IMR-90 (cell line): ENCODE measurements at regions of chr19 and their contacts with region 1.

Region 1: GRCh38 chr19:11435058-11435832 is at the starts of genes ODAD3 and PRKCSH:
- DNase-seq: peak; percentile 100
- ATAC-seq: peak; percentile 97
- H3K4me3 ChIP-seq: peak within 1 kb of the TSS; percentile 72
- H3K27ac ChIP-seq: peak within 1 kb of the TSS; percentile 69
- H3K4me1 ChIP-seq: peaks cover 9% of the 10 kb centered on the region
- H3K27me3 ChIP-seq: no peaks in the 10 kb centered on the region
- CTCF ChIP-seq: peak; percentile 90
- POLR2A ChIP-seq: no peak
- RAD21 ChIP-seq: peak; percentile 28
- total RNA-seq, gene ODAD3: under 0.01 and 0.28 TPM in 2 replicates
- total RNA-seq, gene PRKCSH: 36.0 and 55.8 TPM in 2 replicates

Region 2: GRCh38 chr19:11346092-11346940 is 88.9 kb before region 1 on chr19 and contains the starts of genes CCDC159 and TMEM205:
- CTCF ChIA-PET with region 1: no interaction called
- POLR2A ChIA-PET with region 1: no interaction called
- dilution Hi-C with region 1: no loop called
- in situ Hi-C with region 1: no loop called
- intact Hi-C with region 1: loop called (anchors 1 kb)
- DNase-seq: peak; percentile 99
- ATAC-seq: peak; percentile 96
- H3K4me3 ChIP-seq: peak within 1 kb of the TSS; percentile 73
- H3K27ac ChIP-seq: peak within 1 kb of the TSS; percentile 80
- H3K4me1 ChIP-seq: peaks cover 8% of the 10 kb centered on the region
- H3K27me3 ChIP-seq: no peaks in the 10 kb centered on the region
- CTCF ChIP-seq: 0 out of 2 replicates have a peak, but pooled peaks have one; percentile 22
- POLR2A ChIP-seq: peak; percentile 67
- RAD21 ChIP-seq: peak; percentile 17; the same call in 1 of the 2 replicates
- total RNA-seq, gene CCDC159: 4.4 and 4.7 TPM in 2 replicates
- total RNA-seq, gene TMEM205: 87.5 and 136 TPM in 2 replicates

Region 3: DNA sequence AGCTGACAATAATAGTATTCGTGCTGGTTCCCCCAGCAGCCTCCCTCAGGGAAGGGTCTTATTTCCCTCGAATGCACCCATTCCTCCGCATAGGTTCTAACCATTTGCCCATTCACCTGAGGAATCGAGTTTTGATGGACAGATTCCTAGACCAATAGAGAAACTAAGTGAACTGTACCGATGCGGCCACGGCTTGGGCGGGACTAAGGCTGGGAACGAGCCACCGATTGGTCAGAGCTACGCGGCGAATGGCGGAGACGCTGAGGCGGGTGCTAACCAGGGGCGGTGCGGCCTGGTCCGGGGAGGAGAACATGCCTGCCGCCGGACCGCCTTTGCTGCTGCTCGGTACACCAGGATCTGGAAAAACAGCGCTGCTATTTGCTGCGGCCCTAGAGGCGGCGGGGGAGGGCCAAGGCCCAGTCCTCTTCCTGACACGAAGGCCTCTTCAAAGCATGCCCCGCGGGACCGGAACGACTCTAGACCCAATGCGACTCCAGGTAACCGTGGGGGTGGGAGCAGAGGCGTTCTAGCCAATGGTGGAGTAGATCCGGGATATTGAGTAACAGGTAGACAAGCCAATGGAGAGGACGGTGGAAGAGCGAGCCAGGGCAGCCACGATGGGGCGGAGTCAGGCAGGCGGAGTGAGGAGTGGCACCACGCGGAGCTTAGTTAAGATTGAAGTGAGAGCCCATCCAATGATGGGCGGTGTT is 60.7 kb before region 1 on chr19 and contains the start of gene SWSAP1:
- CTCF ChIA-PET with region 1: interaction called, 9 read pairs
- POLR2A ChIA-PET with region 1: no interaction called
- dilution Hi-C with region 1: no loop called
- in situ Hi-C with region 1: no loop called
- intact Hi-C with region 1: loop called (anchors 2 kb)
- DNase-seq: peak; percentile 99
- ATAC-seq: peak; percentile 94
- H3K4me3 ChIP-seq: peak within 1 kb of the TSS; percentile 58
- H3K27ac ChIP-seq: peak within 1 kb of the TSS; percentile 90
- H3K4me1 ChIP-seq: peaks cover 22% of the 10 kb centered on the region
- H3K27me3 ChIP-seq: no peaks in the 10 kb centered on the region
- CTCF ChIP-seq: no peak
- POLR2A ChIP-seq: peak; percentile 75
- RAD21 ChIP-seq: no peak
- total RNA-seq, gene SWSAP1: 0.36 and 0.56 TPM in 2 replicates

Region 4: GRCh38 chr19:11414544-11414943 is 20.7 kb before region 1 on chr19:
- CTCF ChIA-PET with region 1: interaction called, 3 read pairs
- POLR2A ChIA-PET with region 1: no interaction called
- dilution Hi-C with region 1: no loop called
- in situ Hi-C with region 1: no loop called
- intact Hi-C with region 1: loop called (anchors 1 kb)
- DNase-seq: no peak
- ATAC-seq: no peak
- H3K4me3 ChIP-seq: no peak overlapping the region
- H3K27ac ChIP-seq: no peak overlapping the region
- H3K4me1 ChIP-seq: peaks cover 2% of the 10 kb centered on the region; the same call in 1 of the 2 replicates
- H3K27me3 ChIP-seq: peaks cover 11% of the 10 kb centered on the region
- CTCF ChIP-seq: no peak
- POLR2A ChIP-seq: no peak
- RAD21 ChIP-seq: no peak